Ascending aorta (tissue), 2 donors: ENCODE measurements at regions of chr5 and their contacts with region 1.

Region 1: DNA sequence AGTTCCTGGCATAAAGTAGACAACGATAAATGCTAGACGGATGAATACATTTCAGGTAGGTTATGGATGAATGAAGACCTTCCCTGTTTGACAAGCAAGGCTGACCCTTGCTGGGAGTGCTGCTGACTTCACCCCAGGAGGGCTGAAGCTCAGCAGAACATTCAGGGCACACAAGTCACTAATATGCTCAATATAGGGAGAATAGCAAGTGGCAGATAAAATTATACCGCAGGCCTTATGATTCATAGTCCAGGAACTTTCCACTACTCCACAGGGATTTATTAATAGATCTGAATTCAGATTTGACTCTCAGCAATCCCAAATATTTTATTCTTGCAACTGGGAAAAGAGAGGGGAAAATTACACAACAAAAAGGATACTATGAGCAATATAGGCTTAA is 38.2 kb upstream of the GRAMD2B start:
- DNase-seq: no peak
- H3K4me3 ChIP-seq: no peak overlapping the region
- H3K27ac ChIP-seq: peak overlapping the region; percentile 86 to 90
- H3K4me1 ChIP-seq: peaks cover 26 to 41% of the 10 kb centered on the region in 2 donors
- H3K27me3 ChIP-seq: no peaks in the 10 kb centered on the region
- CTCF ChIP-seq: no peak

Region 2: DNA sequence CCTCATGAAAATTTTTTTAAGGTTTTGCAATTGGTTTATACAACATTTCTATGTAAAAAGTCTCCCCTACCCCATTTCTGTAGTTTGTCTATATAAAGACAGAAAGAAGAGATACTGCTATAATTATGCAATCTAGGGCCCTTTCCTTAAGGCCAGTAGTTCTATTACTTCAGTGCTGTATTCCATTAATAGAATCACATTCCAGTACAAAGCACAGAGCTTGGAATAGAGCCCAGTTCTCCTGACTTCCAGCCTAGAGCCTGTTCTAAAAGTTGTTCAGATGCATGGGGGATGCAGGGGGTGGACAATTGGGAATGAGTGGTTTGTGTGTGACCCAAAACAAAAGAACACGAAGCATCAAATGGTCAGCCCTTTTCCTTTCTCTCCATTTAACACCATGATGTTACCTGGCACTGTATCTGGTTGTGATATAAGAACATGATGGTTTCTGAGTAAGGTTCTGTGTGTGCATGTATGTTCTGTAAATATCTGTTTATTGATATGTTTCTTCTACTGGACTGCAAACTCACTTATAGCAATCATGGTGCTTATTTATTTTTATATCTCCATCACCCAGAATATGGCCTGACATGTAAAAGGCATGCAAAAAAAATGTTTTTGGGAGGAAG is 30.0 kb after region 1 on chr5:
- intact Hi-C with region 1: loop called (anchors 2 kb)
- DNase-seq: peak in 1 of 2 donors; percentile 82
- H3K4me3 ChIP-seq: peak overlapping the region in 1 of 2 donors; percentile 33
- H3K27ac ChIP-seq: peak overlapping the region; percentile 77 to 78
- H3K4me1 ChIP-seq: peaks cover 13 to 33% of the 10 kb centered on the region in 2 donors
- H3K27me3 ChIP-seq: no peaks in the 10 kb centered on the region
- CTCF ChIP-seq: no peak